Caco-2 (cell line): ENCODE measurements at regions of chr1 and their contacts with region 1.

Region 1: GRCh38 chr1:91924146-91924545 is 25.1 kb upstream of the BRDT start:
- DNase-seq: no peak
- H3K4me3 ChIP-seq: no peak overlapping the region
- H3K4me3 Mint-ChIP-seq: no peak overlapping the region
- H3K27ac Mint-ChIP-seq: no peak overlapping the region
- H3K4me1 ChIP-seq: no peaks in the 10 kb centered on the region
- H3K4me1 Mint-ChIP-seq: peaks cover 3% of the 10 kb centered on the region
- H3K27me3 ChIP-seq: no peaks in the 10 kb centered on the region
- H3K27me3 Mint-ChIP-seq: no peaks in the 10 kb centered on the region
- CTCF ChIP-seq: no peak

Region 2: DNA sequence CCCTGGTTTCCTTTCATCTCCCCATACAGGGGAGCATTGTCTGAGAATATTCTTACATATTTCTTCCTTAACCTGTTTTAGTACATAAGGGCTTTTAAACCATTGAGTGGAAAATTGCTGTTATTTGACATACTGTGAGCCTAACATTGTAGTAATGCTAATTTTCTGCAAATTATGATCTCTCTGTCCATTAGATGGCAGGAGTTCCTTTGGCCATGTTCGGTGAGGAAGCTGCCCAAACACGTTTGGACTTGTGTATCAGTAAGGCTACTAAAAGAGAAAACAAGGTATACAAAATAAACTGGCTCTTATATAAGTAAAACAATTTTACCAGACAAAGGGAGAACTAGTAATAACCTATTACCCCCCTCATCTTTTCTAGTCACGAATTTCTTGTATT is 394.3 kb before region 1 on chr1:
- CTCF ChIA-PET with region 1: no interaction called
- POLR2A ChIA-PET with region 1: no interaction called
- intact Hi-C with region 1: loop called (anchors 1 kb)
- DNase-seq: peak in 1 of 2 experiments; percentile 28
- H3K4me3 ChIP-seq: no peak overlapping the region
- H3K4me3 Mint-ChIP-seq: no peak overlapping the region
- H3K27ac Mint-ChIP-seq: no peak overlapping the region
- H3K4me1 ChIP-seq: no peaks in the 10 kb centered on the region
- H3K4me1 Mint-ChIP-seq: peaks cover 12% of the 10 kb centered on the region
- H3K27me3 ChIP-seq: no peaks in the 10 kb centered on the region
- H3K27me3 Mint-ChIP-seq: no peaks in the 10 kb centered on the region
- CTCF ChIP-seq: peak in 1 of 2 experiments; percentile 3

Region 3: GRCh38 chr1:91795591-91796389 is 128.4 kb before region 1 on chr1:
- CTCF ChIA-PET with region 1: interaction called, 6 read pairs
- POLR2A ChIA-PET with region 1: no interaction called
- intact Hi-C with region 1: loop called (anchors 10 kb)
- DNase-seq: no peak
- H3K4me3 ChIP-seq: no peak overlapping the region
- H3K4me3 Mint-ChIP-seq: no peak overlapping the region
- H3K27ac Mint-ChIP-seq: no peak overlapping the region
- H3K4me1 ChIP-seq: 0 out of 2 replicates have a peak, but pooled peaks cover 5% of the 10 kb centered on the region
- H3K4me1 Mint-ChIP-seq: peaks cover 6% of the 10 kb centered on the region
- H3K27me3 ChIP-seq: no peaks in the 10 kb centered on the region
- H3K27me3 Mint-ChIP-seq: no peaks in the 10 kb centered on the region
- CTCF ChIP-seq: no peak

Region 4: GRCh38 chr1:91968334-91968733 is 44.2 kb after region 1 on chr1:
- CTCF ChIA-PET with region 1: no interaction called
- POLR2A ChIA-PET with region 1: no interaction called
- intact Hi-C with region 1: no loop called
- DNase-seq: no peak
- H3K4me3 ChIP-seq: no peak overlapping the region
- H3K4me3 Mint-ChIP-seq: no peak overlapping the region
- H3K27ac Mint-ChIP-seq: no peak overlapping the region
- H3K4me1 ChIP-seq: no peaks in the 10 kb centered on the region
- H3K4me1 Mint-ChIP-seq: no peaks in the 10 kb centered on the region
- H3K27me3 ChIP-seq: no peaks in the 10 kb centered on the region
- H3K27me3 Mint-ChIP-seq: peaks cover 3% of the 10 kb centered on the region
- CTCF ChIP-seq: no peak

Region 5: GRCh38 chr1:91993256-91993655 is 69.1 kb after region 1 on chr1:
- CTCF ChIA-PET with region 1: no interaction called
- POLR2A ChIA-PET with region 1: no interaction called
- intact Hi-C with region 1: no loop called
- DNase-seq: no peak
- H3K4me3 ChIP-seq: no peak overlapping the region
- H3K4me3 Mint-ChIP-seq: no peak overlapping the region
- H3K27ac Mint-ChIP-seq: no peak overlapping the region
- H3K4me1 ChIP-seq: no peaks in the 10 kb centered on the region
- H3K4me1 Mint-ChIP-seq: no peaks in the 10 kb centered on the region
- H3K27me3 ChIP-seq: no peaks in the 10 kb centered on the region
- H3K27me3 Mint-ChIP-seq: no peaks in the 10 kb centered on the region
- CTCF ChIP-seq: no peak